ENCODE measurements at regions of chr9 and their contacts with region 1.

Region 1: DNA sequence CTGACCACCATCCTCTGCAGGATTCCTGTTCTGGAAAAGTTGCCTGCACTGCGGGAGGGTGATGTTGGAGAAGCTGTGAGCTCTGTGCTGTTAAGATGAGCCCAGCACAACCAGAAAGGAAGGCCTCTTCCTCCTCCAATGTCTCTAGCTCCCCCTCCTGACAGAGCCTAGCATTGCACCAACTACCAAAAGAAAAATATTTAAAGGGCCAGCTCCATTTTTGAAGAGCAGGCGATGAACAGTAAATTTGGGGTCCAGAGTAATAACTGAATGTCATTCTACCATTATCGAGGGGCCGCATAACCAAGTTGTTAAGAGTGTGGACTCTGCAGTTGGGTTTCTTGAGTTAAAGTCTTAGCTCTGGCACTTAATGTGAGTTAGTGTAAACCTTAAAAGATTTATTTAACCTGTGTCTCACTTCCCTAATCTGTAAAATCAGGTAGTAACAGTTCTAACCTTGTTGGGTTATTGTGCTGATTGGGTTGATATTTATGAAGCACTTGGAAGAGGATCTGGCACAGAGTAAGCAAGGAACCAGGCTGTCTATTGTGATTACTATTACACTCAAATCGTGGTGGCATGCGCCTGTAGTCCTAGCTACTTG is 3.9 kb downstream of the TEX53 start:
- DNase-seq: peak; percentile 55
- H3K4me3 ChIP-seq: no peak overlapping the region
- H3K27ac ChIP-seq: no peak overlapping the region
- H3K27me3 ChIP-seq: peaks cover 4% of the 10 kb centered on the region
- CTCF ChIP-seq: peak; percentile 99

Region 2: GRCh38 chr9:114397848-114398605 is 255.6 kb before region 1 on chr9:
- CTCF ChIA-PET with region 1: interaction called, 177 read pairs
- POLR2A ChIA-PET with region 1: no interaction called
- DNase-seq: peak; percentile 71
- H3K4me3 ChIP-seq: peak overlapping the region; percentile 87
- H3K27ac ChIP-seq: peak overlapping the region; percentile 73
- H3K27me3 ChIP-seq: no peaks in the 10 kb centered on the region
- CTCF ChIP-seq: no peak

Region 3: GRCh38 chr9:114413861-114414301 is 239.8 kb before region 1 on chr9:
- CTCF ChIA-PET with region 1: interaction called, 38 read pairs
- POLR2A ChIA-PET with region 1: no interaction called
- DNase-seq: no peak
- H3K4me3 ChIP-seq: no peak overlapping the region
- H3K27ac ChIP-seq: no peak overlapping the region
- H3K27me3 ChIP-seq: peaks cover 2% of the 10 kb centered on the region
- CTCF ChIP-seq: no peak

Region 4: DNA sequence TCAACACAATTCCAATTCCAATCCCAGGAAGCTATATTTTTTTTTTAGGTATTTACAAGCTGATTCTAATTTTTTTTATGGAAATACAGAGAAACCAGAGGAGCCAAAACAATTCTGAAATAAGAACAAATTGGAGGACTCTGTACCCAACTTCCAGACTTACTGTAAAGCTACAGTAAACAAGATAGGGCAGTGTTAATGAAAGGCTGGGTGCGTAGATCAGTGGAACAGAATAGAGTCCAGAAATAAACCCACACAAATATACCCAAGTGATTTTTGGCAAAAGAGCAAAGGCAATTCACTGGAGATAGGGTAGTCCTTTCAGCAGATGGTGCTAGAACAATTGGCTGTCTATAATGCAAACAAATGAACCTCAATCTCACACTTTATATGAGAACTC is 199.0 kb before region 1 on chr9:
- CTCF ChIA-PET with region 1: interaction called, 12 read pairs
- POLR2A ChIA-PET with region 1: no interaction called
- DNase-seq: no peak
- H3K4me3 ChIP-seq: no peak overlapping the region
- H3K27ac ChIP-seq: no peak overlapping the region
- H3K27me3 ChIP-seq: peaks cover 12% of the 10 kb centered on the region
- CTCF ChIP-seq: no peak

Region 5: GRCh38 chr9:114587385-114588202 is 66.1 kb before region 1 on chr9 and contains the start of gene ATP6V1G1:
- CTCF ChIA-PET with region 1: interaction called, 11 read pairs
- POLR2A ChIA-PET with region 1: interaction called, 10 read pairs
- DNase-seq: peak; percentile 97
- H3K4me3 ChIP-seq: peak within 1 kb of the TSS; percentile 97
- H3K27ac ChIP-seq: peak within 1 kb of the TSS; percentile 81
- H3K27me3 ChIP-seq: peaks cover 5% of the 10 kb centered on the region
- CTCF ChIP-seq: peak; percentile 21; the same call in 1 of the 2 replicates
- polyA plus RNA-seq, gene ATP6V1G1: 118 and 138 TPM in 2 replicates

Region 6: GRCh38 chr9:114641967-114642366 is 11.7 kb before region 1 on chr9:
- CTCF ChIA-PET with region 1: interaction called, 16 read pairs
- POLR2A ChIA-PET with region 1: no interaction called
- DNase-seq: no peak
- H3K4me3 ChIP-seq: no peak overlapping the region
- H3K27ac ChIP-seq: no peak overlapping the region
- H3K27me3 ChIP-seq: no peaks in the 10 kb centered on the region
- CTCF ChIP-seq: no peak

Region 7: GRCh38 chr9:114906908-114907571 is 253.4 kb after region 1 on chr9:
- CTCF ChIA-PET with region 1: interaction called, 14 read pairs
- POLR2A ChIA-PET with region 1: no interaction called
- DNase-seq: no peak
- H3K4me3 ChIP-seq: no peak overlapping the region
- H3K27ac ChIP-seq: no peak overlapping the region
- H3K27me3 ChIP-seq: no peaks in the 10 kb centered on the region
- CTCF ChIP-seq: peak; percentile 83

Measured in AG04450 (cell line).